CD4-positive, alpha-beta memory T cell (primary cell): ENCODE measurements at regions of chr4 and their contacts with region 1.

Region 1: GRCh38 chr4:142846729-142847596 is 862 bp upstream of the INPP4B start:
- DNase-seq: peak; percentile 72 to 79 (median 75)
- H3K4me3 ChIP-seq: peak overlapping the region; percentile 73 to 77
- H3K4me3 Mint-ChIP-seq: peak overlapping the region; percentile 83 to 94 (median 89)
- H3K27ac ChIP-seq: no peak overlapping the region
- H3K27ac Mint-ChIP-seq: peak overlapping the region in 4 of 7 donors; percentile 23 to 66 (median 44)
- H3K4me1 ChIP-seq: peaks cover 12% of the 10 kb centered on the region
- H3K4me1 Mint-ChIP-seq: peaks cover 8 to 18% (median 12%) of the 10 kb centered on the region in 4 donors
- H3K27me3 ChIP-seq: no peaks in the 10 kb centered on the region
- H3K27me3 Mint-ChIP-seq: peaks cover 7 to 14% of the 10 kb centered on the region in 2 donors

Region 2: DNA sequence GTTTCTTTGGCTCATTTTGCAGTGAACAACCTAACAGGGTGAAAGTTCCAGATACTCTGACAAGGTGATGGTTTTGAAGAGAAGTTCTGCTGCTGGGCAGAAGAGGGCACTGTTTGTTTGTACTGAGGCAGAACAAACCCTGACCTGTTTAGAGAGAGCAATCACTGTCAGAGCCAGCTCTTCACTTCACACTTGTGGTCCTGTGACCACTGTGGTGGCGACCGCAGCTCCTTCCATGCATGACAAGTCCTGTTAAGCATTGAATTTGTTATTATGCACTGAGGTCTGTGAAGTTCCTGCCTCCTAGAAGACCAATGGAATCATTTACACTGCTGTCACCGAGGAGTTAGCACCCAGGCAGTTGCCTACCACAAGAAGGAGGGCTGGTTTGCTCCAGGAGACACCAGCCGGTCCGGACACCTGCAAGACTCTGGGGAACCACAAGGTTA is 1539.7 kb before region 1 on chr4:
- CTCF ChIA-PET with region 1: interaction called, 11 read pairs
- POLR2A ChIA-PET with region 1: no interaction called
- intact Hi-C with region 1: no loop called
- DNase-seq: peak; percentile 60 to 80 (median 64)
- H3K4me3 ChIP-seq: no peak overlapping the region
- H3K4me3 Mint-ChIP-seq: no peak overlapping the region
- H3K27ac ChIP-seq: no peak overlapping the region
- H3K27ac Mint-ChIP-seq: no peak overlapping the region
- H3K4me1 ChIP-seq: no peaks in the 10 kb centered on the region
- H3K4me1 Mint-ChIP-seq: peaks cover 0 to 5% (median 2%) of the 10 kb centered on the region in 4 donors
- H3K27me3 ChIP-seq: no peaks in the 10 kb centered on the region
- H3K27me3 Mint-ChIP-seq: peaks cover 0 to 3% of the 10 kb centered on the region in 2 donors

Region 3: GRCh38 chr4:141636082-141636770 is 1210.7 kb before region 1 on chr4 and contains the start of gene IL15:
- CTCF ChIA-PET with region 1: no interaction called
- POLR2A ChIA-PET with region 1: no interaction called
- intact Hi-C with region 1: loop called (anchors 2 kb)
- DNase-seq: peak; percentile 63 to 85 (median 68)
- H3K4me3 ChIP-seq: peak within 1 kb of the TSS; percentile 50 to 84
- H3K4me3 Mint-ChIP-seq: peak within 1 kb of the TSS; percentile 94 to 98 (median 97)
- H3K27ac ChIP-seq: peak within 1 kb of the TSS; percentile 57
- H3K27ac Mint-ChIP-seq: peak within 1 kb of the TSS; percentile 71 to 98 (median 90)
- H3K4me1 ChIP-seq: peaks cover 18% of the 10 kb centered on the region
- H3K4me1 Mint-ChIP-seq: peaks cover 19 to 30% (median 26%) of the 10 kb centered on the region in 4 donors
- H3K27me3 ChIP-seq: no peaks in the 10 kb centered on the region
- H3K27me3 Mint-ChIP-seq: no peaks in the 10 kb centered on the region
- total RNA-seq, gene IL15: 4.7 to 6.1 TPM

Region 4: DNA sequence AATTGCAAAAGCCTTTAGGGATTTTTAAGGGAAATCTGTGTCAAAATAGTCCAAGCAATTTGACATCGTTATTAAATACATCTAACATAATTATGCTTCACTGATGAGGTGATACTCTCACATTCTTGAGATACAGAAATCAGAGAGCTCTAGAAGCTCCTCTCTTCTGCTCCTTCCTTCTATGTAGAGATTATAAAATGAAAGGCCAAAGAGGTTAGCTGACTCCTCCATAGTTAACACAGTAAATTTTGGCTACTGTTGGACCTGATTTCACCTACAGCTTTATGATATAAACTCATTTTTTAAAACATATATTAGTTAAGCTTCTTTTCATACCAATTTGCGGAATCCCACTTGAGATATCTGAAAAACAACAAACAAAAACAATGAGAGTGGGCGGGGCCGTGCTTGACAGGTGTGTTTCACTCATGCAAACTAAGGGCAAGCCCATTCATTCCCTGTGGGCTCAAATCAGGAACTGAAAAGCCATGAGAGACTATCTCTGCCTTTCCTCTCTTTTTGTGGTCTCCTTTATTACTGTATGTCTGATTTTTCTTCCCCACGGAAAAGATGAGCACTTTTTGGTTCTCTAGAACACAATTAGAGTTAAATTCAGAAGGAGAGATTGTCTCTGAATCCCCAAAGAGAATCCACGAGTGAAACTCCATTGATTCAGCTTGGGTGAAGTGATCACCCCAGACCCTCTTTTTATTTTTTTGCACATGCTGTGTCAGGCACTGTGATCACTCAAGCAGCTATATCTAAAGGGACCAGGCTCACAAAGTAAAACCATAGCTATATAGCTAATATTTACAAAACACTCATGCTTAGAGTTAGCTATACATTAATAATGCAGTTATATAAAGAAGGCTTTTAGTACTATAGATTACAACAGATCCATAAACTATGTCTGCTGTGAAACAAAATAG is 644.3 kb before region 1 on chr4:
- CTCF ChIA-PET with region 1: no interaction called
- POLR2A ChIA-PET with region 1: no interaction called
- intact Hi-C with region 1: loop called (anchors 10 kb)
- DNase-seq: no peak
- H3K4me3 ChIP-seq: no peak overlapping the region
- H3K4me3 Mint-ChIP-seq: no peak overlapping the region
- H3K27ac ChIP-seq: no peak overlapping the region
- H3K27ac Mint-ChIP-seq: peak overlapping the region in 2 of 7 donors; percentile 5 to 36
- H3K4me1 ChIP-seq: no peaks in the 10 kb centered on the region
- H3K4me1 Mint-ChIP-seq: peaks cover 13 to 19% (median 15%) of the 10 kb centered on the region in 4 donors
- H3K27me3 ChIP-seq: no peaks in the 10 kb centered on the region
- H3K27me3 Mint-ChIP-seq: no peaks in the 10 kb centered on the region

Region 5: DNA sequence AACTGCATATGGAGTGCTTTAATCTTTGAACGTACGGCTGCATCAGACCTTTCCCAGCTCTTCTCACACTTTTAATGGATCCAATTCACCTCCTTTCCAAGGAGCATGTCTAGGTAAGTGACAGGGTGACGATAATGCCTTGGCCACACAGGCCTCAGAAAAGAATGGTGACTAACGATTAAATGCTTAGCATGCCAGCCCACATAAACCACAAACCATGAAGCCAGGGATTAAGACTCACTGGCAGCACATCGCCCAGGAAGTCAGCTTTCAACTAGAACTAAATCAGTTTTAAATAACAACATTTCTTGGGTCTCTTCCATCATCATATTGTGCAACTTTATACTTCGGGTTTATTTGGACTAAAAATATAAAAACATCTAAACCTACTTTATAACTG is 29.5 kb before region 1 on chr4:
- CTCF ChIA-PET with region 1: no interaction called
- POLR2A ChIA-PET with region 1: no interaction called
- intact Hi-C with region 1: no loop called
- DNase-seq: peak; percentile 6 to 49 (median 17)
- H3K4me3 ChIP-seq: no peak overlapping the region
- H3K4me3 Mint-ChIP-seq: peak overlapping the region in 4 of 8 donors; percentile 1 to 45 (median 3)
- H3K27ac ChIP-seq: no peak overlapping the region
- H3K27ac Mint-ChIP-seq: peak overlapping the region in 2 of 7 donors; percentile 6 to 53
- H3K4me1 ChIP-seq: peaks cover 10% of the 10 kb centered on the region
- H3K4me1 Mint-ChIP-seq: peaks cover 10 to 12% (median 12%) of the 10 kb centered on the region in 4 donors
- H3K27me3 ChIP-seq: no peaks in the 10 kb centered on the region
- H3K27me3 Mint-ChIP-seq: no peaks in the 10 kb centered on the region

Region 6: GRCh38 chr4:143184217-143185116 is 337.5 kb after region 1 on chr4 and contains the start of gene USP38:
- CTCF ChIA-PET with region 1: no interaction called
- POLR2A ChIA-PET with region 1: no interaction called
- intact Hi-C with region 1: loop called (anchors 5 kb)
- DNase-seq: peak; percentile 83 to 94 (median 86)
- H3K4me3 ChIP-seq: peak within 1 kb of the TSS; percentile 59 to 79
- H3K4me3 Mint-ChIP-seq: peak within 1 kb of the TSS; percentile 87 to 96 (median 94)
- H3K27ac ChIP-seq: peak within 1 kb of the TSS; percentile 93
- H3K27ac Mint-ChIP-seq: peak within 1 kb of the TSS; percentile 95 to 99 (median 98)
- H3K4me1 ChIP-seq: peaks cover 49% of the 10 kb centered on the region
- H3K4me1 Mint-ChIP-seq: peaks cover 35 to 63% (median 49%) of the 10 kb centered on the region in 4 donors
- H3K27me3 ChIP-seq: no peaks in the 10 kb centered on the region
- H3K27me3 Mint-ChIP-seq: no peaks in the 10 kb centered on the region
- total RNA-seq, gene USP38: 25.8 to 26.4 TPM